PC-9 (cell line): ENCODE measurements at regions of chrX and their contacts with region 1.

Region 1: GRCh38 chrX:107776649-107777535 is 641 bp upstream of the NCBP2L start:
- DNase-seq: peak; percentile 78 to 85
- H3K4me3 ChIP-seq: peak overlapping the region; percentile 82; the same call in 1 of the 2 replicates
- H3K27ac ChIP-seq: no peak overlapping the region
- H3K4me1 ChIP-seq: peaks cover 37% of the 10 kb centered on the region
- H3K27me3 ChIP-seq: no peaks in the 10 kb centered on the region
- CTCF ChIP-seq: peak; percentile 93

Region 2: DNA sequence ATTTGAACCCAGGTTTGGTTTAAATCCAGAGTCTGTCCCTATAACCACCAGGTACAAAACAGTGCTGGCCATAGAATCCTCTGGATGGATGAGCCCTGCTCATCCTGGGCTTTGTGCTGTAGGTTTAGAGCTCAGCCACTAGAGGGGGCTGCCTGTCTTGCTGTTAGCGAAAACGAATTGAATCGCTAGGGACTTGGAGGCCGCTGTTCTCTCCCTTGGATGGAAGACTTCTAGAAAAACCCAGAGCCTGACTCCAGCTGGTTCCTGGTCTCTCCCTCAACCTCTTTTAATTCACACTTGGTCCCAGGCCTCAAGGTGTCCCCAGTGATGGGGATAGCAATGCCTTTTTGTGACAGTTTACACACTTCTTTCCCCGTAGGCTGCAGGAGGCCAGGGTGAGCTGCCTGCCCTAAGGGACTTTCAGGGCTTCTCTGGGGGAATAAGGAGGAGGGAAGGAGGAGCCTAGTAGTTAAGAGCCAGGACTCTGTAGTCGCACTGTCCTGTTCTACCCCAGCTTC is 882.4 kb before region 1 on chrX:
- CTCF ChIA-PET with region 1: no interaction called
- POLR2A ChIA-PET with region 1: no interaction called
- intact Hi-C with region 1: loop called (anchors 5 kb)
- DNase-seq: peak; percentile 56 to 68
- H3K4me3 ChIP-seq: no peak overlapping the region
- H3K27ac ChIP-seq: peak overlapping the region; percentile 62
- H3K4me1 ChIP-seq: peaks cover 35% of the 10 kb centered on the region
- H3K27me3 ChIP-seq: no peaks in the 10 kb centered on the region
- CTCF ChIP-seq: peak; percentile 86

Region 3: DNA sequence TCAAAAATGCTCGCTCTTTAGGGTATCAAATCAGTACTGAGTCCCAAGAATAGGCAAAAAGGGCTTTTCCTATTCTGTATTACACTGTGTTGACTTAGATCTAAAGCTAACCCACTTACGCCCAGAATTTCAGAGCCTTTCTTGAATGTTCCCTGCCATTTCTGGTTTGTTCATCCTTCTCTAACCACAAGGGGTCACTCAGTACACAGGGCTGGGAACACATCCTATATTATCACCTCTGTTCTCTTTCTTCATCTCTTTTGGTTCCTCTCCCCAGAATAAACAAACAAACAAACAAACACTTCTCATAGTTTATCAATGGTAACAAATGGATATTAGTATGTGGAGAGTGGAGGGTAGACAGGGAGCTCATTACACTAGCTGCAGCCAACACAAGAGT is 751.3 kb before region 1 on chrX:
- CTCF ChIA-PET with region 1: no interaction called
- POLR2A ChIA-PET with region 1: no interaction called
- intact Hi-C with region 1: loop called (anchors 2 kb)
- DNase-seq: no peak
- H3K4me3 ChIP-seq: no peak overlapping the region
- H3K27ac ChIP-seq: no peak overlapping the region
- H3K4me1 ChIP-seq: no peaks in the 10 kb centered on the region
- H3K27me3 ChIP-seq: no peaks in the 10 kb centered on the region
- CTCF ChIP-seq: peak; percentile 73

Region 4: DNA sequence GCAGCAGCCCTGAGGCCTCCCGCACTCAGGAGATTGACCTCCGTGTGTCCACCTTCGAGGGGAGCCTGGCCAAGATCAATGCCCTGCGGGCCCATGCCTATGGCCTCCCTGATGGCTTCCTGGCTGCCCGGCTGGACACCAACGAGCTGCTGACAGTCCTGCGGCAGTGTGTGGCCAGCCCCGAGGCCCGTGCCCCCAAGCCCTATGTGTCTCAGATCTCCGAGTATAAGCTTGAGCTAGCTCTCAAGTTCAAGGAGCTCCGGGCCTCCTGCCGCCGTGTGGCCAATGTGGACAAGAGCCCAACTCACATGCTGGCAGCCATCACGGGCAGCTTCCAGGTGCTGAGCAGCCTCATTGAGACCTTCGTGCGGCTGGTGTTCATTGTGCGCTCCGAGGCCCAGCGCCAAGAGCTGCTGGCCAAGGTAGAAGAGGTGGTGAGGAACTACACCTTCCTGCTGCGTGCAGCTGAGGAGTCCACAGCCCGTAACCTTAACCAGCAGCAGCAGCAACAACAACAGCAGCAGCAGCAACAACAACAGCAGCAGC is 174.1 kb before region 1 on chrX:
- CTCF ChIA-PET with region 1: no interaction called
- POLR2A ChIA-PET with region 1: no interaction called
- intact Hi-C with region 1: no loop called
- DNase-seq: no peak
- H3K4me3 ChIP-seq: no peak overlapping the region
- H3K27ac ChIP-seq: no peak overlapping the region
- H3K4me1 ChIP-seq: peaks cover under 1% of the 10 kb centered on the region; the same call in 1 of the 2 replicates
- H3K27me3 ChIP-seq: no peaks in the 10 kb centered on the region
- CTCF ChIP-seq: no peak

Region 5: DNA sequence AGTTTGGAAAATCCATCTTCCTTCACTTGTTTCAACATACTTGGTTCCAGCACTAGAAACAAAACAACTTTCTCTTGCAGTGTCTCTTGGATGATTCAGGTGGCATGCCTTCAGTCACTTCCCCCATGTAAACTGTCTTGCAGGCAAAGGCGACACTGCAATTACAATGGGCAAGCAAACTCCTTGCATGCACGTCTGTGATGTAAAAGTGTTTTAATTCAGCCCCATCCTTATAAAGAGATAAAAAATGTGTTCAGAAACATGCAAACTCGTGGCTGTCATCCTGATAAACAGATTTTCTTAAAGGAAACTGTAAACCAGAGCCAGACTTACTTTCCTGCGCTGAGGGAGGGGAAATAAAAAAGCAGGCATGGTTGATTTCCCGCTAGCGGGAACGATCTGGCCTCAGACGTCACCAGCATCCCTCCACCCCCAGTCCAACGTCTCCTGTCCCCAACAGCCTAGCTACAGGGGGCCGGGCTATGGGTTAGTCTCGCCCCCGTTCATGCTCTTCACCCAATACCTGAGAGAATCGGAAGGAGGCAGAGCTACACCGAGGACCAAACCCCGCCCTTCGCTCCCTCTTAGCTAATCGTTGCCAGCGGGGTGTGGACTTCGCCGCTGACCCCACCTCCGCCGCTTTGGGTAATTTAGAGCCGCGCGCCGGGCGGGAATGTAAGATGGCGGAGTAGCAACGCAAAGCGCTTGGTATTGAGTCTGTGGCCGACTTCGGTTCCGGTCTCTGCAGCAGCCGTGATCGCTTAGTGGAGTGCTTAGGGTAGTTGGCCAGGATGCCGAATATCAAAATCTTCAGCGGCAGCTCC is 148.8 kb before region 1 on chrX and contains the start of gene PRPS1:
- CTCF ChIA-PET with region 1: interaction called, 8 read pairs
- POLR2A ChIA-PET with region 1: no interaction called
- intact Hi-C with region 1: loop called (anchors 1 kb)
- DNase-seq: peak; percentile 93 to 97
- H3K4me3 ChIP-seq: peak within 1 kb of the TSS; percentile 74
- H3K27ac ChIP-seq: peak within 1 kb of the TSS; percentile 57
- H3K4me1 ChIP-seq: peaks cover 40% of the 10 kb centered on the region
- H3K27me3 ChIP-seq: no peaks in the 10 kb centered on the region
- CTCF ChIP-seq: no peak
- total RNA-seq, gene PRPS1: 67.4 and 67.9 TPM in 2 replicates

Region 6: DNA sequence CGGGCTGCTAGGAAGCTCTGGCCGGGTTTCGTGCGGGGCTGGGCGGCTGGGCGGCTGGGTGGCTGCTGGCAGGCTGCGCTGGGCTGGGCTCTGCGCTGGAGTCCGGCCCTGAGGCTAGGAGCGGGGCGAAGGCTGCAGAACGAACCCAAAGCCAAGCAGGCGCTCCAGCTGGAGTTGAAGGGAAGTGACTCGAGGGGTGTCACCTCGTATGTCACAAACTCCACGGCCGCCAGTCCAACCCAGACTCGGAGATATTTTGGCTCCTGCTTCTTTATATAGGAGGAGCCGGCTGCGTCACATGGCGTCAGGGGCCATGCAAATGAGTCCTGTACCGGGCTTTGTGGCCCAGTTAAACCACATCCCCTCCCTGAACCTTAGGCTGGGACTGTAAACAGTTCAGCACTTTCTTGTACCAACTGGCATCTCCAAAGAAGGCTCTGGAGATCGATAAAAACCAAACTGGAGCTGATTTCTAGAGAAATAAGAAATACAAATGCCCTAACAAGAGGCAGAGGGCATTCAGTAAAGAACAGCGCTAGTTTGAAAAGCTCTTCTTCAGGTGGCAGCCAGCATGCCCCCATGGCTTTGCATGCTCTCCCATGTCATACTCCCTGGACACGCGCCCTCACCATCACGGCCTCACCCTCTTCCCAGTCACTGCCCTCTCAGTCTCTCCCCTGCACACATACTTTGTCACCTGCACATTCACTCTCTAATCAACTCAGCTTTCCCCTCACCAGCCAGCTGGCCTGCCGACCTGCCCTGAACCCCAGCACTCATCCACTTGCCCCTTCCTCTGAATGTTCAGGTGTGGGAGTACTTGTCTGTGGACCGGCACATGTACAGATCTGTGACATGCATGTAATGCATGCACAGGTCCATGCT is 59.8 kb before region 1 on chrX:
- CTCF ChIA-PET with region 1: interaction called, 4 read pairs
- POLR2A ChIA-PET with region 1: no interaction called
- intact Hi-C with region 1: loop called (anchors 1 kb)
- DNase-seq: peak; percentile 74 to 80
- H3K4me3 ChIP-seq: peak overlapping the region; percentile 91
- H3K27ac ChIP-seq: 0 out of 2 replicates have a peak overlapping the region, but pooled peaks have one; percentile 95
- H3K4me1 ChIP-seq: peaks cover 43% of the 10 kb centered on the region
- H3K27me3 ChIP-seq: no peaks in the 10 kb centered on the region
- CTCF ChIP-seq: no peak

Region 7: GRCh38 chrX:108070891-108071290 is 294.0 kb after region 1 on chrX:
- CTCF ChIA-PET with region 1: no interaction called
- POLR2A ChIA-PET with region 1: no interaction called
- intact Hi-C with region 1: loop called (anchors 1 kb)
- DNase-seq: peak; percentile 19 to 73
- H3K4me3 ChIP-seq: no peak overlapping the region
- H3K27ac ChIP-seq: peak overlapping the region; percentile 44; the same call in 1 of the 2 replicates
- H3K4me1 ChIP-seq: peaks cover 19% of the 10 kb centered on the region
- H3K27me3 ChIP-seq: no peaks in the 10 kb centered on the region
- CTCF ChIP-seq: no peak